Left ventricle myocardium superior (tissue), 1 donor: ENCODE measurements at regions of chr10 and their contacts with region 1.

Region 1: GRCh38 chr10:34677591-34677990 is 137.5 kb downstream of the PARD3 start:
- DNase-seq: no peak
- ATAC-seq: no peak

Region 2: GRCh38 chr10:34815185-34816084 is 137.8 kb after region 1 on chr10 and contains the start of gene PARD3:
- intact Hi-C with region 1: loop called (anchors 10 kb)
- DNase-seq: peak; percentile 84
- ATAC-seq: peak; percentile 86
- total RNA-seq, gene PARD3: 25.3 TPM

Region 3: DNA sequence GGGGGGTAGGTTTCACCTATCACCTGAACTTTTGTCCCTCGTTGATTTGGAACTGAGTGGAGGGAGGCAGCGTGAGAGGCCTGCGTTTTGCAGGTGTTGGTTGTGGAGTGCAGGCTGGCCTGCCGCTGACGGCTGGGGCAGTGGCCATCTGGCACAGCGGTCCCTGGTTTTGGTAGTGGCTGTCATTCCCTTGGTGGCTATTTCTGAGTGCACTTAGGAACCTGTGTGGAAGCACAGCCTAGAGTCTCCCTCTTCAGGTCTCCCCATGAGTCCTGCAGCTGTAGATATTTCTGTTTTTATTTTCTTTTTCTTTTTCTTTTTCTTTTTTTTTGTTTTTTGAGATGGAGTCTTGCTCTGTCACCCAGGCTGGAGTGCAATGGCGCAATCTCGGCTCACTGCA is 283.4 kb after region 1 on chr10:
- intact Hi-C with region 1: loop called (anchors 10 kb)
- DNase-seq: peak; percentile 64
- ATAC-seq: peak; percentile 97